ENCODE measurements at regions of chr14 and their contacts with region 1.

Region 1: GRCh38 chr14:22314181-22314820 is 274.7 kb downstream of the DAD1 start:
- DNase-seq: peak in 2 of 5 donors; percentile 69 to 76
- H3K4me3 ChIP-seq: no peak overlapping the region
- H3K27ac ChIP-seq: no peak overlapping the region
- H3K4me1 ChIP-seq: no peaks in the 10 kb centered on the region
- H3K27me3 ChIP-seq: no peaks in the 10 kb centered on the region
- CTCF ChIP-seq: peak; percentile 57

Region 2: DNA sequence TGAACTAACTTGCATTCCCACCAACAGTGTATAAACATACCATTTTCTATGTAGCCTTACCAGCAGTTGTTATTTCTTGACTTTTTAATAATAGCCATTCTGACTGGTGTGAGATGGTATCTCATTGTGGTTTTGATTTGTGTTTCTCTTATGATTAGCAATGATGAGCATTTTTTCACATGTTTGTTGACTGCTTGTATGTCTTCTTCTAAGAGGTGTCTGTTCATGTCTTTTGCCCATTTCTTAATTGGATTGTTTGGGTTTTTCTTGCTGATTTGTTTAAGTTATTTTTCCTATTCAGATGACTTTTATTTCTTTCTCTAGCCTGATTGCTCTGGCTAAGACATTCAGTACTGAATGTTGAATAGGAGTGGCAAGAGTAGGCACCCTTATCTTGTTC is 44.4 kb after region 1 on chr14:
- intact Hi-C with region 1: no loop called
- DNase-seq: no peak
- H3K4me3 ChIP-seq: no peak overlapping the region
- H3K27ac ChIP-seq: no peak overlapping the region
- H3K4me1 ChIP-seq: no peaks in the 10 kb centered on the region
- H3K27me3 ChIP-seq: no peaks in the 10 kb centered on the region
- CTCF ChIP-seq: no peak

Region 3: GRCh38 chr14:22375321-22375930 is 61.1 kb after region 1 on chr14:
- intact Hi-C with region 1: loop called (anchors 10 kb)
- DNase-seq: peak in 2 of 5 donors; percentile 78 to 86
- H3K4me3 ChIP-seq: no peak overlapping the region
- H3K27ac ChIP-seq: no peak overlapping the region
- H3K4me1 ChIP-seq: no peaks in the 10 kb centered on the region
- H3K27me3 ChIP-seq: no peaks in the 10 kb centered on the region
- CTCF ChIP-seq: peak; percentile 33